ENCODE measurements at regions of chr1 and their contacts with region 1.

Region 1: GRCh38 chr1:61337981-61338848 is 255.9 kb downstream of the NFIA start:
- DNase-seq: peak; percentile 80
- H3K4me3 Mint-ChIP-seq: peak overlapping the region; percentile 51
- H3K27ac Mint-ChIP-seq: peak overlapping the region; percentile 68
- H3K4me1 Mint-ChIP-seq: peaks cover 35% of the 10 kb centered on the region
- H3K27me3 Mint-ChIP-seq: no peaks in the 10 kb centered on the region
- CTCF ChIP-seq: peak; percentile 80

Region 2: DNA sequence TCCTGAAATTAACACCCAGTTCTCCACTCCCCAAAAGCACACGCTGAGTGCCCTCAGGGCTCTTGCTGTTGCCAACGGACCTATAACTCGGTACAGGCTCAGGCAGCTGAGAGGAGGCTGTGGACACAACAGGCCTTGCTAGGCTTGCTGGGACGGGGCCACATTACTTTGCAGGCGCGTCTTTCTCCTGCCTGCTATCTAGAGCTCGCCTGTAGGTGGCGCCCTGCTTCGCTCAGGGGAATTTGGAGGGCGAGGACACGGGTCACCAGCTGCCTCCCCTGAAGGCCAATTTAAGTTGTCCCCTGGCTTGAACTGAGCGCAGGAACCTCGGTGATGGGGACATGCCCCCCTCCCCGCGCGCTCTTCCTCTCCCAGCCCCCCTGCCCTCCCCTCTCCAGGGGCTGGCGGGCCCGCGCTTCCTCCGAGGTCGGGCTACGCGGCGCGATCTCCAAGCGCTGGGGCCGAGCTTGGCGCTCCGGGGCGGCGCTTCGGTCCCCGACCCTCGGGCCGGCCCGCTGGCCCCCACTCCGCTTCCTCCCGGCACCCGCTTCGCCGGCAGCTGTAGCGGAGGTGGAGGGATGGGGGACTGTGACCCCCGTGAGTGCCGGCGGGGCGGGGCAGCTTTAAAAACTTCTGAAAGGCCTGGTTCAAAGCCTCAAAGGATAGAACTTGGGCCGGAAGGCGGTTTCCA is 288.2 kb before region 1 on chr1:
- CTCF ChIA-PET with region 1: interaction called, 5 read pairs
- intact Hi-C with region 1: loop called (anchors 1 kb)
- DNase-seq: peak; percentile 93
- H3K4me3 Mint-ChIP-seq: peak overlapping the region; percentile 71
- H3K27ac Mint-ChIP-seq: peak overlapping the region; percentile 33
- H3K4me1 Mint-ChIP-seq: peaks cover 19% of the 10 kb centered on the region
- H3K27me3 Mint-ChIP-seq: peaks cover 27% of the 10 kb centered on the region
- CTCF ChIP-seq: peak; percentile 97

Region 3: GRCh38 chr1:61157468-61157987 is 180.7 kb before region 1 on chr1:
- CTCF ChIA-PET with region 1: no interaction called
- intact Hi-C with region 1: loop called (anchors 2 kb)
- DNase-seq: no peak
- H3K4me3 Mint-ChIP-seq: no peak overlapping the region
- H3K27ac Mint-ChIP-seq: no peak overlapping the region
- H3K4me1 Mint-ChIP-seq: peaks cover 43% of the 10 kb centered on the region
- H3K27me3 Mint-ChIP-seq: no peaks in the 10 kb centered on the region
- CTCF ChIP-seq: no peak

Region 4: GRCh38 chr1:61287734-61288133 is 50.5 kb before region 1 on chr1:
- CTCF ChIA-PET with region 1: interaction called, 11 read pairs
- intact Hi-C with region 1: loop called (anchors 2 kb)
- DNase-seq: peak; percentile 53
- H3K4me3 Mint-ChIP-seq: no peak overlapping the region
- H3K27ac Mint-ChIP-seq: peak overlapping the region; percentile 71
- H3K4me1 Mint-ChIP-seq: peaks cover 63% of the 10 kb centered on the region
- H3K27me3 Mint-ChIP-seq: no peaks in the 10 kb centered on the region
- CTCF ChIP-seq: no peak

Region 5: DNA sequence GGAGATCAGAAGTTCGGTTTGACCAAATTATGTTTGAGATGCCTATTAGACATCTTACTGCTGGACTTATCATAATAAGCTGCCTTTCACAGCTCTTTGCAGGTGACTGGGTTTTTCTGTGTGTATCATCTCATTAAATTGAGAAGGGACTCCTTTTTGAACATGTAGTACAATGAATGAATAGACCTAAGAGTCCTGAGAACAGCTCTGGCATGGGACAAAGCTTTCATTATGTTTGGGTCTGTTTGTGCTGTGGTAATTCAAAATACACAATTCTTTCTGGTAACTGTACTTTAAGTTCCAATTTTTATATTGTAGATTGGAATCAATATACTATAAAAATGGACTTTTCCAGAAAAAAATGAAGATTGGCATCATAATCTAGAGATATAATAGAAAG is 74.4 kb after region 1 on chr1:
- CTCF ChIA-PET with region 1: no interaction called
- intact Hi-C with region 1: no loop called
- DNase-seq: no peak
- H3K4me3 Mint-ChIP-seq: no peak overlapping the region
- H3K27ac Mint-ChIP-seq: no peak overlapping the region
- H3K4me1 Mint-ChIP-seq: no peaks in the 10 kb centered on the region
- H3K27me3 Mint-ChIP-seq: no peaks in the 10 kb centered on the region
- CTCF ChIP-seq: no peak

Region 6: DNA sequence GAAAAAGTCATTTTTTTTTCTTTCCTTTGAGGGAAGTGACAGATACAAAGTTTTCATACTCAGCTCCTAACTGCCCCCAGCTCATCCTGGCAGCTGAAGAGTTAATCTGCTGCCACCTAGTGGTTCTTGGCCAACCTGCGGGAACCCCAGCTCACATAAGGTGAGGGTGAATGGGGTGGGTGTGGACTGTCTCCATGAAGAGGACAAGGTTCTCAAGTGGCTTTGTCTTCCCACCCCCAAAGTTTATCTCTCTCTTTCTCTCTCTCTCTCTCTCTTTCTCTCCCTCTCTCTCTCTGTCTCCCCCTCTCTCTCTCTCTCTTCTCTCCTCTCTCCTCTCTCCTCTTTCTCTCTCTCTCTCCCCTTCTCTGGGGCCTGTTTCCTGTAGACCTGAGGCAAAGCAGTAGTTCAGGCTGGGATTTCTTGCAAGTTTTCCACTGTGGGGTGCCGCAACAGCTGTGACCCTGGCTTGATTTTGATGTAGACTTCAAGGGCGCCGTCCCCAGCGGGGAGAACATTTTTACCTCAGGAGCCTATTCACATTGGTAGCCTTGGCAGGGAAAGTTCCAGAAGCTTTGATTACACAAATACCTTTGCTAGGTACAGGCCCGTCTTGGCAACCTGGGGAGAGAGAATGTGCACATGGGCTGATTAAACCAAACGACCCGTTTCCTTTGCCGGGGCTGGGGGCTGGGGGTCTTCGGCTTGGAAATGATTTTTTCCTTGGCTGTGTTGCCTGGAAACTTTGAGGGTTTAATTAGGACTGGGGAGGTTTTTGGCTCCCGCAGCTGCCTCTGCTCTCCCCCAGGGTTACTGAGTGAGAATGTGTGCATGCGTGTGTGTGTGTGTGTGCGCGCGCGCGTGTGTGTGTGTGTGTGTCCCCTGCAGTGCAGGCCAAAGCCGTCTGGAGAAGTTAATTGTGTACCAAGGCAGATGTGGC is 250.8 kb after region 1 on chr1:
- CTCF ChIA-PET with region 1: interaction called, 4 read pairs
- intact Hi-C with region 1: loop called (anchors 2 kb)
- DNase-seq: peak; percentile 79
- H3K4me3 Mint-ChIP-seq: no peak overlapping the region
- H3K27ac Mint-ChIP-seq: no peak overlapping the region
- H3K4me1 Mint-ChIP-seq: peaks cover 9% of the 10 kb centered on the region
- H3K27me3 Mint-ChIP-seq: peaks cover 18% of the 10 kb centered on the region
- CTCF ChIP-seq: peak; percentile 73

Region 7: DNA sequence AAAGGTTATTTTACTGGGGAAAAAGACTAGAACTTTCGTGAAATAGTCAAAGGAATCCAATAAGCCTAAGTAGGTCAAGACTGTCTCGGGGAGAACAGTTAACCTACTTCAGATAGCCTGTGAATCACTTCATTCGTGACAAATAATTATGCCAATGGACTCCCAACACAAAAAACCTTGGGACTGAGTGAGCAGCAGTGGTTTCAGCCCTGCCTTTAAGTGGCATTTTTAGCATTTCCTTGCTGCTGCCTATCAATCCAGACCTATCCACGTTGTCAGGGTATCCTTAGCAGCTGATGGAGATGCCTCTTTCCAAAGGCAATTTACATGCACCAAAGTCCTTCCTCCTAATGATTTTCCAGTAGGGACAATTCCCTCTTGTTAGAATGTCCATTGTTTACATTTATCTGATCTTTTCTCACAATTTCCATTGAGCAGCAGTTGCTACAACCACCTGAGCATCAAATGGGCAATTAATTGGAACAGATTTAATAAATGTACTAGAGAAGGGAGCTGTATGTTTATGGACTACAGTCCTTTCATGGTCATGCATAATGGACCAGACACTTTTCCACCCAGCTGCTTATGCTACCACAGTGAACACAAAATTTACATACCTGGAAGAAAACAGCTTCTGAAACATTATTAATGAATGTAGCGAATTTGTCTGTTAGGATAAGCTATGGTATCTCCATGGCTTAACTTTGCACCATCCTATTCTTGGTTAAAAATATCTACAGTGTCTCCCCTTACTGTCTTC is 310.9 kb after region 1 on chr1:
- CTCF ChIA-PET with region 1: no interaction called
- intact Hi-C with region 1: no loop called
- DNase-seq: no peak
- H3K4me3 Mint-ChIP-seq: no peak overlapping the region
- H3K27ac Mint-ChIP-seq: no peak overlapping the region
- H3K4me1 Mint-ChIP-seq: peaks cover 15% of the 10 kb centered on the region
- H3K27me3 Mint-ChIP-seq: no peaks in the 10 kb centered on the region
- CTCF ChIP-seq: no peak